WTC11 (cell line): ENCODE measurements at regions of chr1 and their contacts with region 1.

Region 1: GRCh38 chr1:28893403-28894102 is 20.8 kb upstream of the EPB41 start:
- DNase-seq: peak; percentile 64
- ATAC-seq: peak; percentile 87
- H3K4me3 Mint-ChIP-seq: no peak overlapping the region
- H3K27ac Mint-ChIP-seq: peak overlapping the region; percentile 71; the same call in 1 of the 2 replicates
- H3K4me1 Mint-ChIP-seq: peaks cover 16% of the 10 kb centered on the region
- H3K27me3 Mint-ChIP-seq: peaks cover 6% of the 10 kb centered on the region; the same call in 1 of the 2 replicates
- CTCF ChIP-seq: peak; percentile 35; the same call in 1 of the 2 replicates

Region 2: GRCh38 chr1:28845786-28846543 is 47.6 kb before region 1 on chr1:
- CTCF ChIA-PET with region 1: no interaction called
- POLR2A ChIA-PET with region 1: no interaction called
- DNase-seq: peak; percentile 41
- ATAC-seq: peak; percentile 98
- H3K4me3 Mint-ChIP-seq: no peak overlapping the region
- H3K27ac Mint-ChIP-seq: peak overlapping the region; percentile 47
- H3K4me1 Mint-ChIP-seq: peaks cover 4% of the 10 kb centered on the region
- H3K27me3 Mint-ChIP-seq: no peaks in the 10 kb centered on the region
- CTCF ChIP-seq: no peak

Region 3: DNA sequence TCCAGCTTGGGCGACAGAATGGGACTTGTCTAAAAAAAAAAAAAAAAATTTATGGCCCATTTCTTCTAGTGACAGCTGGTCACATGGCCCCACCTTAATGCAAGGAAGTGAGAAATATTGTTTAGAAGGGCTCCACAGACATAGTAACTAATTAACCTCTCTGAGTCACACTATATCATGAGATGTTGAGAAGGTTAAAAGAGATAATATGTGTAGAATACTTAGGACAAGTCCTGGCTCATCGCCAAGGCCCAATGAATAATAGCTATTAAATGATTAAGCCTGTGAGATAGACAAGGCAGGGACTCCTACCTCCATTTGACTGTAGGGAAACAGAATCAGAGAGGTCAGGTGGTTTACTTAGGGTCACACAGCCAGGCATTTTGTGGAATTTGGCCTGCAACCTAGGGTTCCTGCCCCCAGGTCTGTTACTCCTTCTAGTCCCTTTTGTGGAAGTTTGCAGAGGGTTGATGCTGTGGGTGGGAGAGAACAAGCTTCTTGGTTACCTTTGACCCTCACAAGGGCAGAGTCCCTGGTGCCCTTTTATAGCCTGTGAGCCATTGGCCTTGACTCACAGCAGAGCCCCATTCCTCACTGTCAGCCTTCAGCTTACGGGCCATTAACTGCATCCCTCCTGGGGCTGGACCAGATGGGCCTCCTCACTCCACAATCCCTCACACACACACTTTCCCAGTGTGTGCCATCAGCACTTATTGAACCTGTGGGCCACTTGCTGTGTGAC is 33.0 kb before region 1 on chr1:
- CTCF ChIA-PET with region 1: no interaction called
- POLR2A ChIA-PET with region 1: no interaction called
- DNase-seq: no peak
- ATAC-seq: no peak; the same call in 1 of the 2 replicates
- H3K4me3 Mint-ChIP-seq: no peak overlapping the region
- H3K27ac Mint-ChIP-seq: no peak overlapping the region
- H3K4me1 Mint-ChIP-seq: 0 out of 2 replicates have a peak, but pooled peaks cover 3% of the 10 kb centered on the region
- H3K27me3 Mint-ChIP-seq: no peaks in the 10 kb centered on the region
- CTCF ChIP-seq: no peak

Region 4: GRCh38 chr1:28905921-28906666 is 12.5 kb after region 1 on chr1:
- CTCF ChIA-PET with region 1: interaction called, 11 read pairs
- POLR2A ChIA-PET with region 1: no interaction called
- DNase-seq: no peak
- ATAC-seq: no peak
- H3K4me3 Mint-ChIP-seq: no peak overlapping the region
- H3K27ac Mint-ChIP-seq: no peak overlapping the region
- H3K4me1 Mint-ChIP-seq: no peaks in the 10 kb centered on the region
- H3K27me3 Mint-ChIP-seq: no peaks in the 10 kb centered on the region
- CTCF ChIP-seq: no peak

Region 5: DNA sequence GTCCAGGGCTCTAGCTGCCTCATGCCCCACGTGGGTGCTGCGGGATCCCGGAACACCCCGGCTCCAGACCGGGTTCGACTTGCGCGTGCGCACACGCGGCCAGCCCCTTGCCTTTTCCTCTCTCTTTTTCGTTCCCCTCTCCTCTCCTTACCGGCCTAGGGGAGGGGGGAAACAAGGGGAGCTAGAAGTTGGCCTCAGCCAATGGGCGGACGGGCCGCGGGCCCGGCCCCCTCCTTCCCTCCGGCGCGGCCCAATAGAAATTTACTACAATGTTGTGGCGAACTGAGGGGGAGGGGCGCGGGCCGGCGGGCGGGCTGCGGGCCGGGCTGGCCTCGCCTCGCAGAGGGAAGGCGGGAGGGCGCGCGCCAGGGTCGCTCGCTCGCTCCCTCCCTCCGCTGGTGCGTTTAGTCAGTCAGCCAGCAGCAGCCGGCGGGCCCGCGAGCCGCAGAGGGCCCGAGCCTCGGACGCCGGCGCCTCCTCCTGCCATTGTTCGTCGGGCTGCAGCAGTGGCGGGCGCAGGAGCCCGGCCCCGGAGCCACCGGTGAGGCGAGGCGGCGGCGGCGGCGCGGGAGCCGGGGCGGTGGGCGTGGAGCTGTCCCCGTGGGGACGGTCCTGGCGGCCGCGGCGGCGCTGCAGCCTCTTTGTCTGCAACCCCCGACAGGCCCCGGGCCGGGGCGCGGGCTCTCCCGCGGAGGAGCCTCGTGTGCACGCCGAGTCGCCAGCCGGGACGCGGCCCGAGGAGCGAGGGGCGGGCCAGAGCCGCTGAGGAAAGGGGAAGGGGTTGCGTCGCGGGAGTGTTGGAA is 20.9 kb after region 1 on chr1 and contains the start of gene EPB41:
- CTCF ChIA-PET with region 1: interaction called, 15 read pairs
- POLR2A ChIA-PET with region 1: interaction called, 3 read pairs
- DNase-seq: peak; percentile 97
- ATAC-seq: peak; percentile 96
- H3K4me3 Mint-ChIP-seq: peak within 1 kb of the TSS; percentile 97
- H3K27ac Mint-ChIP-seq: peak within 1 kb of the TSS; percentile 97
- H3K4me1 Mint-ChIP-seq: peaks cover 26% of the 10 kb centered on the region
- H3K27me3 Mint-ChIP-seq: no peaks in the 10 kb centered on the region
- CTCF ChIP-seq: no peak
- total RNA-seq, gene EPB41: 80.6 to 85.0 TPM (median 81.2 TPM) in 3 replicates

Region 6: GRCh38 chr1:28934676-28935075 is 41.1 kb after region 1 on chr1:
- CTCF ChIA-PET with region 1: no interaction called
- POLR2A ChIA-PET with region 1: no interaction called
- DNase-seq: no peak
- ATAC-seq: no peak
- H3K4me3 Mint-ChIP-seq: no peak overlapping the region
- H3K27ac Mint-ChIP-seq: no peak overlapping the region
- H3K4me1 Mint-ChIP-seq: peaks cover under 1% of the 10 kb centered on the region; the same call in 1 of the 2 replicates
- H3K27me3 Mint-ChIP-seq: no peaks in the 10 kb centered on the region
- CTCF ChIP-seq: no peak

Region 7: DNA sequence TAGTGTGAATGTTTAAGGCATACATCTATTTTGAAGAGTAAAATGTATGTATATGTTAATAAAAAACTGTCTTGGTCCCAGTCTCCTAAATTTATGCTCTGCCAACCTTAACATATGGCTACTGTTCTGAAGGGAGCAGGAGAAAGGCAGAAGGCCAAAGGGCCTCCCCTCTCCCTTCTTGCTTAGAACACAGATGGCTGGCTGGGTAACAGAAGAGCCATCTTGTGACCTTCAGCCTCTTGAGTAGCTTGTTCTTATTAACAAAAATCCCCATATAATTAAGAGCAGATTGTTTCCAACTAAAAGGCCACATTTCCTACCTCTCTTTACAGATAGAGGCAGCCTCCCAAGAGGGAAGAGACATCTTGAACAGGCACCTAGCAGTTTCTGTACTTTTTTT is 56.9 kb after region 1 on chr1:
- CTCF ChIA-PET with region 1: no interaction called
- POLR2A ChIA-PET with region 1: no interaction called
- DNase-seq: no peak
- ATAC-seq: no peak
- H3K4me3 Mint-ChIP-seq: no peak overlapping the region
- H3K27ac Mint-ChIP-seq: peak overlapping the region; percentile 82; the same call in 1 of the 2 replicates
- H3K4me1 Mint-ChIP-seq: peaks cover 17% of the 10 kb centered on the region
- H3K27me3 Mint-ChIP-seq: no peaks in the 10 kb centered on the region
- CTCF ChIP-seq: no peak

Region 8: DNA sequence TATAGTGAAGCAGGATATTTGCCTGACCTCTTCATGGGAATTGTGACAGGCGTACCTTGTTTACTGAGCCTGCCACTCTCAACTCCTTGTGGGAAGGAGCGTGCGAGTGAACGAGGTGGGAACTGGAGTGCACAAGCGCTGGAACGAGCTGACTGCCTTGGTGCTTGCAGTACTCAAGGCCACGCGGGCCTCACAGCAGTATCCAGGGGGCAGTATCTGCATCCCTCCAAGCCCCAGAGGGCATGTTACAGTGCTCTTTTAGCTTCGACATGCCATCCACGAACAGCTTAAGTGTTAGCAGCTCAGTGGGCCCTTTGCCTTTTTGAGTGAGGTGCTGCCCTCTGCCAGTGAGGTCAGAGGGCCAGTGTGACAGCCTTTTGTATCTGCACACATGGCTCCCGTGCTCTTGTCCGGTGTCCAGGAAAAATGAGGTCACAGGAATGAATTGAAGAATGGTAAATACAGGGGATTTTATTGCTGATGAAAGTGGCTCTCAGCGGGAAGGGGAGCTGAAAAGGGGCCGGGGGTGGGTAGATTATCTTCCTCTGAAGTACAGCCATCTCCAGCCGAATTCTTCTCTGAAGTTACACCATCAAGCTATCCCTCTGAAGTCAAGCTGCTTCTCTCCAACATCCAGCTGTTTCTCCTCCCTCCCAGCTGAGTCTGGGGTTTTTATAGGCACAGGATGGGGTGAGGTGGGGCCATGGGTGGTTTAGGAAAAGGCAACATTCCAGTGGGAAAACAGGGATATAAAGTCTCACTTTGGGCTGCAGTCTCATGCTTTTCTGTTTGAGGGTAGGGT is 90.2 kb after region 1 on chr1:
- CTCF ChIA-PET with region 1: interaction called, 14 read pairs
- POLR2A ChIA-PET with region 1: no interaction called
- DNase-seq: peak; percentile 47
- ATAC-seq: peak; percentile 91
- H3K4me3 Mint-ChIP-seq: peak overlapping the region; percentile 23
- H3K27ac Mint-ChIP-seq: peak overlapping the region; percentile 91
- H3K4me1 Mint-ChIP-seq: peaks cover 39% of the 10 kb centered on the region
- H3K27me3 Mint-ChIP-seq: no peaks in the 10 kb centered on the region
- CTCF ChIP-seq: no peak

Region 9: DNA sequence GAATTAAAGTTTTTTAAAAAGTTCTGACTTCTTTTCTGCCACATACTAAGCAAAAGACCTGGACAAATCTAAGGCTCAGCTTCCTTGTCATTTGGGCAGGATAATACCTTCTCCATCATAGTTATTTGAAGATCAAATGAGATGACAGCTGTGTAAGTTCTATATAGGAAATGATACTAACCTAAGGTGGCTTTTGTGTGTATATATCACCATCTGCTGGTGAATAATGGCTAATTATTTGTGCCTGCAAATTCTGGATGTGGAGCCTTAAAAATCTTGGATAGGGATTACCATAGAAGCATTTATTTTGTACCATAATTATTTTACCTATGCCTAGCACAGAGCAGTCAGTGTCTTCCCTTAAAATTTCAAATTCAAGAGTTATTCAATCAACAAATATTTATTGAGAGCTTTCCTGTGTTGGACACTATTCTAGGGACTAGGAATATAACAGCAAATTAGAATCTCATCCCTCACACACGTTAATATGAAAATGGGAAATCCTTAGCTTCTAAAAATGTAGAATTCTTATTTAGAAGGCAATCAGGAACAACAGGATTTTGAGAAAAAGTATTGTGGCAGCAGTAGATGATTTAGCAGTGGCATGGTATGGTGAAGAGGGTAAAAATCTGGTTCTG is 140.4 kb after region 1 on chr1:
- CTCF ChIA-PET with region 1: interaction called, 29 read pairs
- POLR2A ChIA-PET with region 1: no interaction called
- DNase-seq: no peak
- ATAC-seq: no peak
- H3K4me3 Mint-ChIP-seq: no peak overlapping the region
- H3K27ac Mint-ChIP-seq: no peak overlapping the region
- H3K4me1 Mint-ChIP-seq: peaks cover 9% of the 10 kb centered on the region
- H3K27me3 Mint-ChIP-seq: no peaks in the 10 kb centered on the region
- CTCF ChIP-seq: no peak

Region 10: DNA sequence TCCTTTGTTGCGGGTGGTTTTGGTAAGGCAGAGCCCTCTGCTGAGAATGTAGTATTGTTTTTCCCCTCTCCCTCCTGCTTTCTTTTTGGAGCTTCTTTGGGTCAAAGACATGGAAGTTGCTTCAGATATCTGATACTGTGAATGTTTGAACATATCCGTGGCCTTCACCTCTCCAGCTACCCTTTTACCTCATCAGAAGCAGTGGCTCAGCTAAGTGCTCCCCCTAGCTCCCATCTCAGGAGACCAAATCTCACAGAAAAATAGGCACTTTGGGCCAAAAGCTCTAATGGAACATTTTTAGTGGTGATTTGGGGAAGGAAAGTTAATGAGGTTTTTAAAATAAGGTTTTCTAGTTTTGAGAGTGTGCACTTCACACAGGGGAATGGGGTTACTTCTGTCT is 223.8 kb after region 1 on chr1:
- CTCF ChIA-PET with region 1: interaction called, 11 read pairs
- POLR2A ChIA-PET with region 1: no interaction called
- DNase-seq: no peak
- ATAC-seq: no peak
- H3K4me3 Mint-ChIP-seq: no peak overlapping the region
- H3K27ac Mint-ChIP-seq: no peak overlapping the region
- H3K4me1 Mint-ChIP-seq: peaks cover 23% of the 10 kb centered on the region
- H3K27me3 Mint-ChIP-seq: peaks cover 10% of the 10 kb centered on the region
- CTCF ChIP-seq: no peak

Region 11: GRCh38 chr1:29197585-29197924 is 304.0 kb after region 1 on chr1:
- CTCF ChIA-PET with region 1: interaction called, 12 read pairs
- POLR2A ChIA-PET with region 1: no interaction called
- DNase-seq: peak; percentile 27
- ATAC-seq: peak; percentile 96
- H3K4me3 Mint-ChIP-seq: no peak overlapping the region
- H3K27ac Mint-ChIP-seq: no peak overlapping the region
- H3K4me1 Mint-ChIP-seq: peaks cover 6% of the 10 kb centered on the region
- H3K27me3 Mint-ChIP-seq: no peaks in the 10 kb centered on the region
- CTCF ChIP-seq: no peak